K562 (cell line): ENCODE measurements at regions of chr2 and their contacts with region 1.

Region 1: DNA sequence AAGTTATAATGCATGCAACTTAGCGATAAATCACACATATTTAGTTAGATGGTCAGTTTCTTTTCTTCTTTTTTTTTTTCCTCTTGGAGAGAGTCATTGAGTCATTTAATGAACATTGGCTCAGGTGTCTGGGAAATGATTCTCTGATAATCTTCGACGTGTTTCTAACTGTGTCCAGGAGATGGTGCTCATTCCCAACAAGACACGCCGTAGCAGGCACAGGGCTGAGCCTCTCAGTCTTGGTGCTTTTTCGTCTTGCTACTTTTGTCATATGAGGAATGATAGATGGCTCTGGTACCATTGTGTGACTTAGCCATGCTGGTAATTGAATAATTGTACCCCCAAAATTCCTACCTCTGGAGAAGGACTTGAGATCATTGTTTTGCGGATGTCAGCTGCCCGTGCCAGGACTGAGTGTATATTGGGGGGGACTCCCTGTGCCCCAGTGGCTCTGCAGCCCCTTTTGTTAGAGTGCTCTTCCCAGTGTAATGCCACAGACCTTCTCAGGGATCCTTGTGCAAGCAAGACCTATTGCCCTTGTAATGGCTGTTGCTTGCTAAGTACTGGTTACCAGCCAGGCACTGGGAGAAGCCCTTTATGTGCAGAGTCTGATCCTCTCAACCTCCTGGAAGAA is 107.6 kb upstream of the CYRIA start:
- DNase-seq: peak; percentile 45 to 65 (median 54)
- ATAC-seq: peak; percentile 91
- H3K4me3 ChIP-seq: no peak overlapping the region
- H3K27ac ChIP-seq: no peak overlapping the region
- H3K4me1 ChIP-seq: no peaks in the 10 kb centered on the region; a peak in 1 of 5 replicates
- H3K27me3 ChIP-seq: 0 out of 5 replicates have a peak, but pooled peaks cover 0 to 2% of the 10 kb centered on the region in 2 experiments
- CTCF ChIP-seq: peak; percentile 69 to 83 (median 78)
- EP300 ChIP-seq: no peak
- POLR2A ChIP-seq: no peak
- RAD21 ChIP-seq: peak; percentile 84 to 87

Region 2: DNA sequence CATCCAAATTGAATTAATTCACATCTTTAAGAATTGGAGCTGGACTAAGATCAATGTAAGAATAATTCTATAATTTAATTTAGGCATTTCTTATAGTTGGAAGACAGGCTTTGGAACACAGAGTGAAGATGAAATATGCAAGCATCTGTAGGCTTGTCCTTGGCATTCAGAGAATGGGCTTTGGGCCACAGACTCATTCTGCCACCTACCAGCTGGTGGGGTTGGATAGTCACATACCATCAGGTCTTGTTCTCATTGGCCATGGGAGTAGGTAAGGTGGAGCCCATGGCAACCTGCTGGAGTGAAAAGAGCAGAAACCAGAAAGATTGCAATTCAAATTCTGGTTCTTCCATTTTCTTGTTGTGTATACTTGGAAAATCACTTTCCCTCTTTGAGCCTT is 407.8 kb before region 1 on chr2:
- CTCF ChIA-PET with region 1: no interaction called
- POLR2A ChIA-PET with region 1: no interaction called
- in situ Hi-C with region 1: no loop called
- intact Hi-C with region 1: no loop called
- DNase-seq: no peak
- ATAC-seq: no peak
- H3K4me3 ChIP-seq: no peak overlapping the region
- H3K27ac ChIP-seq: no peak overlapping the region
- H3K4me1 ChIP-seq: no peaks in the 10 kb centered on the region
- H3K27me3 ChIP-seq: no peaks in the 10 kb centered on the region
- CTCF ChIP-seq: no peak
- EP300 ChIP-seq: no peak
- POLR2A ChIP-seq: no peak
- RAD21 ChIP-seq: no peak

Region 3: DNA sequence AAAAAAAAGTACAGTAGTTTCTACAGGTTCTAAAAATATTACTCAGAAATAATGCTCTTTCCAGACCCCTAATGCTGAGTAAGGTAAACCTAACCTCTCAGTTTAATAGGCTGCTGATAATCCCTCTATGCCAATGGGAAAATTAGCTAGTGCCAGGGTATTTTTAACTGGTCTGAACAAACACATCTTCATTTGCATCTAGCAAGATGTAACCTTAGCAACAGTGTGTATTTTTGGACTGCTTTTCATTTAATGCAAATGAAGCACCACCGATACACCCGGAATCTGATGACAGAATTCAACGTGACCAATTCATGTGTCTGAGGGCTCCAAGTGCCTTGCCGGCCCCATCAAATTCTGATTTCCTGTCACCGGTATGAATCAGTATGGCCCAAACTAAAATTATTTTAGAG is 60.2 kb before region 1 on chr2:
- CTCF ChIA-PET with region 1: no interaction called
- POLR2A ChIA-PET with region 1: no interaction called
- in situ Hi-C with region 1: no loop called
- intact Hi-C with region 1: no loop called
- DNase-seq: no peak
- ATAC-seq: no peak
- H3K4me3 ChIP-seq: no peak overlapping the region
- H3K27ac ChIP-seq: no peak overlapping the region
- H3K4me1 ChIP-seq: peaks cover 0 to 13% of the 10 kb centered on the region in 2 experiments; a peak in 3 of 5 replicates
- H3K27me3 ChIP-seq: peaks cover 2 to 10% of the 10 kb centered on the region in 2 experiments; a peak in 2 of 5 replicates
- CTCF ChIP-seq: no peak
- EP300 ChIP-seq: no peak
- POLR2A ChIP-seq: no peak
- RAD21 ChIP-seq: no peak

Region 4: GRCh38 chr2:16900405-16901025 is 127.3 kb after region 1 on chr2:
- CTCF ChIA-PET with region 1: interaction called, 13 read pairs
- POLR2A ChIA-PET with region 1: no interaction called
- in situ Hi-C with region 1: no loop called
- intact Hi-C with region 1: loop called (anchors 1 kb)
- DNase-seq: peak in 3 of 4 experiments; percentile 10 to 62 (median 11)
- ATAC-seq: peak; percentile 95
- H3K4me3 ChIP-seq: no peak overlapping the region
- H3K27ac ChIP-seq: no peak overlapping the region
- H3K4me1 ChIP-seq: no peaks in the 10 kb centered on the region
- H3K27me3 ChIP-seq: no peaks in the 10 kb centered on the region
- CTCF ChIP-seq: peak; percentile 87 to 100 (median 99)
- EP300 ChIP-seq: no peak
- POLR2A ChIP-seq: no peak
- RAD21 ChIP-seq: peak; percentile 45 to 72

Region 5: DNA sequence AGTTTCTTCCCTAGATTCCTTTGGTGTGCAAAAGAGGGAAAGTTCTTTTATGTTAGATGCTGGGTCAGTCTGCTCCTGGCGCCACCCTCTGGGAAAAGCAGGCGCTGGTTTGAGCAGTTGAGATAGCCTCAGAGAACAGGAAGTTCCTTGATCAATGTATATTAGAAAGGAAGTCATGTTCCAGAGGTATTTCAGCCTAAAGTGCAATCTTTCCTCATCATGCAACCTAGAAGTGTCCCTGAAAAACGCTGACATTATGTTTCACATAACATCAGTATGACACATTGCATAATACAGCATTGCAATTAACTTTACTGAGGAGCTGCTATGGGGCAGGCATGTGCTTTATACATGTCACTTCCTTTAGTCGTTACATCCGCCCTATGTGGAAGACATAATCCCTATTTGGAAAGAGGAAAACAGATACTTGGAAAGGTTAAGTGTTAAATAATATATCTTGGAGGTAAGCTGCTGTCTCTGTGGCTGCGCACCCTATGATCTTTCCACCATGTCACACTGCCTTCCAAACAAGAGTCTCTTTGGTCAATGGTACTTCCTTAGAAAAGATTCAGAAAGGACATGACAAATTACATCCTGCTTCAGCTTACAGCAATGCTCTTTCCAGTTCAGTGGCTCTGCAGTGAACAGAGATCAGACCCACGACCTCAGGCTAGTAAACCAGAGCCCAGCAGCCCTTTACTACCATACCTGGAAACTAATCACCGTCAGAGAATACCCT is 375.4 kb after region 1 on chr2:
- CTCF ChIA-PET with region 1: no interaction called
- POLR2A ChIA-PET with region 1: interaction called, 3 read pairs
- in situ Hi-C with region 1: no loop called
- intact Hi-C with region 1: loop called (anchors 5 kb)
- DNase-seq: peak in 2 of 4 experiments; percentile 40 to 68
- ATAC-seq: peak; percentile 94
- H3K4me3 ChIP-seq: no peak overlapping the region
- H3K27ac ChIP-seq: no peak overlapping the region
- H3K4me1 ChIP-seq: peaks cover 0 to 11% of the 10 kb centered on the region in 2 experiments; a peak in 3 of 5 replicates
- H3K27me3 ChIP-seq: no peaks in the 10 kb centered on the region
- CTCF ChIP-seq: peak; percentile 60 to 74 (median 72)
- EP300 ChIP-seq: no peak
- POLR2A ChIP-seq: no peak
- RAD21 ChIP-seq: peak; percentile 73 to 75

Region 6: GRCh38 chr2:17309741-17310339 is 536.6 kb after region 1 on chr2:
- CTCF ChIA-PET with region 1: interaction called, 14 read pairs
- POLR2A ChIA-PET with region 1: interaction called, 4 read pairs
- in situ Hi-C with region 1: loop called (anchors 5 kb)
- intact Hi-C with region 1: loop called (anchors 1 kb)
- DNase-seq: peak; percentile 54 to 73 (median 66)
- ATAC-seq: peak; percentile 94
- H3K4me3 ChIP-seq: no peak overlapping the region
- H3K27ac ChIP-seq: no peak overlapping the region
- H3K4me1 ChIP-seq: no peaks in the 10 kb centered on the region
- H3K27me3 ChIP-seq: no peaks in the 10 kb centered on the region
- CTCF ChIP-seq: peak; percentile 67 to 77 (median 74)
- EP300 ChIP-seq: no peak
- POLR2A ChIP-seq: no peak
- RAD21 ChIP-seq: peak; percentile 80 to 81

Region 7: GRCh38 chr2:17460371-17461086 is 687.3 kb after region 1 on chr2:
- CTCF ChIA-PET with region 1: no interaction called
- POLR2A ChIA-PET with region 1: no interaction called
- in situ Hi-C with region 1: no loop called
- intact Hi-C with region 1: loop called (anchors 10 kb)
- DNase-seq: no peak
- ATAC-seq: no peak
- H3K4me3 ChIP-seq: no peak overlapping the region
- H3K27ac ChIP-seq: no peak overlapping the region
- H3K4me1 ChIP-seq: no peaks in the 10 kb centered on the region
- H3K27me3 ChIP-seq: no peaks in the 10 kb centered on the region
- CTCF ChIP-seq: no peak
- EP300 ChIP-seq: no peak
- POLR2A ChIP-seq: no peak
- RAD21 ChIP-seq: no peak

Region 8: DNA sequence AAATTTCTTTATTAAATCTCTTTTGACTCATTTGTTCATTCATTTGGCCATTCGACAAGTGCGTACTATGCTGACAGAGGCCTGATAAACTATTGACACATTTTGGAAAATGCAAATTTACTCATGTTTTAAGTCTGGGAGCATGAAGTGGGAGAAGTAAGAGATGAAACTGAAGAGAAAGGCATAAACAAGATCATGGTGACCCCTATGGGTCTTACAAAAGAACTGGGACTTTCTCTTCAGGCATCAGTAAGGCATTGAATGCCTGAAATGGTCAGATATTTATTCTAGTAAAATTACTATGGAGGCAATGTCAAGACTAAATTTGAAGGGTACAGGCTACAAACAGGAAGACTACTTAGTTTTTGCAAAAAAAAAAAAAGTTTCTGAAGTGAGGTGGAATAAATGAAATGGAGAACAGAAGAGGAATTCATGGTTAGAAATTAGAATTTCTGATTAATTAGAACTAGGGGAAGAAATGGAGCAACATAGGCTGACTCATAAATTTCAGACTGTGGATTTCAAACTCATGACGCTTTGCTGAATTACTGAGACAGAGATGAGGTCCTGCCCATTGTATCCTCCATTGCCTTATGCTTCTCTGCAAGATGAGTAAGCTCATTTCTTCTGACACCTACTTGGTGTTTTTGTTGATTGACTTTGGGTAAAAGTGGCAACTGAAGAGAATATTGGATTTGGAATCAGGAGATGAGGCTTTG is 800.0 kb after region 1 on chr2:
- CTCF ChIA-PET with region 1: no interaction called
- POLR2A ChIA-PET with region 1: no interaction called
- in situ Hi-C with region 1: no loop called
- intact Hi-C with region 1: loop called (anchors 10 kb)
- DNase-seq: no peak
- ATAC-seq: peak; percentile 54; the same call in 1 of the 3 replicates
- H3K4me3 ChIP-seq: no peak overlapping the region
- H3K27ac ChIP-seq: no peak overlapping the region
- H3K4me1 ChIP-seq: no peaks in the 10 kb centered on the region
- H3K27me3 ChIP-seq: 0 out of 5 replicates have a peak, but pooled peaks cover 0 to 4% of the 10 kb centered on the region in 2 experiments
- CTCF ChIP-seq: peak in 1 of 3 experiments; percentile 14; a peak in 2 of 6 replicates
- EP300 ChIP-seq: no peak
- POLR2A ChIP-seq: no peak
- RAD21 ChIP-seq: peak in 1 of 2 experiments; percentile 67; a peak in 3 of 4 replicates

Region 9: DNA sequence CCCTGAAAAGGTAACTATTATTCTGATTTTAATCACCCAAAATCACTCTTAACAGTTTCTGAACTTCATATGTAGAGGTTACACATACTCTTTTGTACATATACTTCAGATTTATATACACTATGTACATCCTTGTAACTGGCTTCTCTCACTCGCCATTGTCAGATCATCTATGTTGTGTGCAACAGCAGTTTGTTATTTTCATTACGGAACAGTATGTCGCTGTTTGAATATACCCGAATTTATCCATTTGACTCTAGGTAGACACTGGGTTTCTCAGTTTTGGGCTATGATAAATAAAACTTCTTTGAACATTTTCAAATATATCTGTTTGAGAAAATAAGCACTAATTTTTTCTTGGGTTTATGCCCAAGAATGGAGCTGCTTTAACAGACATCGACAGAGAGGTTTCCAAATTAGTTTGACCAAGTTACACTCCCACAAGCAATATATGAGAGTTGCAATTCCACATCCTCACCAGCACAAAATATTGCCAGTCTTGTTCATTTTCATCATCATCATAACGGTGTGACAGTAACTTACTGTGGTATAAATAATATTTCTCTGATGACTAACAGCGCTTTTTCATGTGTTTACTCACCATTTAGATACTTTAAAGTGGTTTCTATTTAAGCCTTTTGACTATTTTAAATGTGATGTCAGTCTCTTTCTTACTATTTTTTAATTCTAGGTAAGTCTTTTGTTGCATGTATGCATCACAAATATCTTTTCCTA is 899.6 kb after region 1 on chr2:
- CTCF ChIA-PET with region 1: interaction called, 9 read pairs
- POLR2A ChIA-PET with region 1: no interaction called
- in situ Hi-C with region 1: loop called (anchors 10 kb)
- intact Hi-C with region 1: loop called (anchors 5 kb)
- DNase-seq: no peak
- ATAC-seq: peak; percentile 70
- H3K4me3 ChIP-seq: no peak overlapping the region
- H3K27ac ChIP-seq: no peak overlapping the region
- H3K4me1 ChIP-seq: no peaks in the 10 kb centered on the region
- H3K27me3 ChIP-seq: no peaks in the 10 kb centered on the region
- CTCF ChIP-seq: no peak
- EP300 ChIP-seq: no peak
- POLR2A ChIP-seq: no peak
- RAD21 ChIP-seq: no peak